Activated B cell treated with CpG ODN at 0.5 μM for 24 hours (primary cell): ENCODE measurements at regions of chr2 and their contacts with region 1.

Region 1: GRCh38 chr2:239303711-239304532 is 96.9 kb downstream of the HDAC4 start:
- DNase-seq: peak; percentile 13
- ATAC-seq: peak; percentile 82
- H3K4me3 Mint-ChIP-seq: peak overlapping the region; percentile 29
- H3K27ac Mint-ChIP-seq: peak overlapping the region; percentile 11
- H3K4me1 Mint-ChIP-seq: peaks cover 44% of the 10 kb centered on the region
- H3K27me3 Mint-ChIP-seq: no peaks in the 10 kb centered on the region
- CTCF ChIP-seq: no peak

Region 2: DNA sequence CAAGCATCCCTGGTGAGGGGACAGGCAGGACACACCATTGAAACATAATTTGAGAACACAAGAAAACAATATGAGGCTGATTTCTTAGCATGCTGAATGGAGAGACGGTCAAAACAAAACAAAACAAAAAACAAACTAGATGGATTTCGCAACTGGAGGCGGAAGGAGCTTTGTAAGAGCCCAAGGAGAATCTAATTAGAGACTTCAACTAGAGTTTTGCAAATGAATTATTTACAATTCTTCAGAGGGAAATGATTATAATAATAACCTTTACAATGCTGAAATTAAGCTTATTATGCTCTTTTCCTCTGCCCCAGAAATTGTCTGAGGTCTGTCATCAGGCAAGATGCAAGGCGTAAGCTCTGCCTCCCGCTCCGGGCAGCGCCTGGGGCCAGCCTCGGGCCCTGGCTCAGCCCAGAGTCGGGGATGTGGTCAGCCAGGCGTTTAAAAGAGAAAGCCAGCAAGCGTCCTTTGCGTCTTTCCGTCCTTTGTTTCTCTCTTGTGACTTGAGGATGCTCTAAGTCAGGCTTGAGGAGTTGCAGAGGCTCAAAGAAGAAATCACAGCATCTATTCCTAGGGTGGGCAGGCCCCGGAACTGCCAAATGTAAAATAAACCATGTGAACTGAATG is 316.5 kb before region 1 on chr2:
- CTCF ChIA-PET with region 1: no interaction called
- POLR2A ChIA-PET with region 1: no interaction called
- intact Hi-C with region 1: no loop called
- DNase-seq: no peak
- ATAC-seq: no peak
- H3K4me3 Mint-ChIP-seq: no peak overlapping the region
- H3K27ac Mint-ChIP-seq: no peak overlapping the region
- H3K4me1 Mint-ChIP-seq: no peaks in the 10 kb centered on the region
- H3K27me3 Mint-ChIP-seq: peaks cover 4% of the 10 kb centered on the region
- CTCF ChIP-seq: no peak

Region 3: DNA sequence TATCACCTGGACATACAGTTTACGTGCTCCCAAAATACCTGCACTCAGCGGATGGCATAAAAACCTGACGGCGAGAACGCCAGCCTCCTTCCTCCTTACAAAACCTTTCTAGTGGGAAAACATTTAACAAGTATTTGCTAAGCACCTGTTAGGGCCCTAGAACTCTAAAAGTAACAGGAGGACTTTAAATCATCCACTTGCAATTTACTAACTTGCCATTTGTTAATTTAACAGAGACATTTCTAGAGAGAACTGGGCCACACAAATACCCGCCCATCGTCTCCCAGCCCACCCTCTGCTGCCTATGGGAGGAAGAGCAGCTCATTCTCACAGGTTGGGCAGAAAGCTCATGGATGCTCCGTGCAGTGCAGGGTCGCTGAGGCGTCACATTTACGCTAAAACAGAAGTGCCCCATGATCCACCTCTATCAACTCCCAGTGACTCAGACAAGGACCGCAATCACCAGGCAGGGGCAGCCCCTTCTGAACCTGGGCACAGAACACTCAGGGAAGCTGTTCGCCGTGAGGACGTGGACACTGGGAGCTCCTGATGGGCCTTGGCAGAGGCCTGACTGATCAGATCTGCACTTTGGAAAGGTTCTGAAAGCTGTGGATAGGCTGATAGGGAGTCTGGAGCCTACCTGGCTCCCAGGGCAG is 10.0 kb before region 1 on chr2:
- CTCF ChIA-PET with region 1: interaction called, 3 read pairs
- POLR2A ChIA-PET with region 1: interaction called, 4 read pairs
- intact Hi-C with region 1: loop called (anchors 1 kb)
- DNase-seq: no peak
- ATAC-seq: peak; percentile 85
- H3K4me3 Mint-ChIP-seq: peak overlapping the region; percentile 28
- H3K27ac Mint-ChIP-seq: no peak overlapping the region
- H3K4me1 Mint-ChIP-seq: peaks cover 71% of the 10 kb centered on the region
- H3K27me3 Mint-ChIP-seq: peaks cover 4% of the 10 kb centered on the region
- CTCF ChIP-seq: no peak

Region 4: DNA sequence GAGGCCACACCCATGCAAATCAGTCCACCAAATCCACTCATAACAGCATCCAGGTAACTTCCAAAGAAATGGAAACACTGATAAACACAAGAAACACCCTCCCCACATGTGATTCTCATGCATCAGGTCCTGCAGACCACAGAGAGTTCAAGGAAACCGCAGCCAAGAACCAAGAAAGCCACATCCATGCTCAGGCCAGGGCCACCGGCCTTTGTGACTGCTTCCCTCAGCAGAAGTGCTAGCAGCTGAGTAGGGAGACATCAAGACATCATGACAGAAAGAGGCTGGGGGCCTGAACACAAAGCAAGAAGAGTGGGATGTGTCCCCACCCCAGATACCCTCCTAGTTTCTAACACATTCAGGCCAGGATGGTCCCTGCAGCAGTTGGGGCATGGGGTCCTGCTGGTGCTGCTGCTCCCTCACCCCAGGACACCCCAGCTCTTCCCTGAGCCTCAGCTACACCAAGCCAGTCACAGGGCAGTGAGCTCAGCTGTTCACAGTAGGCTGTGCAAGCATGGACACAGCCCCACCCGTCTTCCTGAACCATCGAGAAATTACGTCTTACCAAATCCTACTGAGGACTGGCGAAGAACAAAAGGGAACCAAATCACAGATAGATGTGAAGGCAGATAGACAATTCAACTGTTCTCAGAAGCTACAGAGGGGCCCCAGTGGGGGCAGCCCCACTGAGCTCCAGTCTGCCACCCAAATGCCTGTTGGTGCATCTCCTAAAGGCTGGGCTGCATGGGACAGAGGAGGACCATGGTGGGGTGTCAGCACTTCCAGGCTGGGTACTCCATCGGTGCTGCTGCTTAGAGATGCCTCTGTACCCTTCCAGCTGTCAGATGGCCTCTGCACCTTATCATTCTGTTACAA is 36.0 kb after region 1 on chr2:
- CTCF ChIA-PET with region 1: no interaction called
- POLR2A ChIA-PET with region 1: no interaction called
- intact Hi-C with region 1: loop called (anchors 5 kb)
- DNase-seq: no peak
- ATAC-seq: peak; percentile 68
- H3K4me3 Mint-ChIP-seq: no peak overlapping the region
- H3K27ac Mint-ChIP-seq: no peak overlapping the region
- H3K4me1 Mint-ChIP-seq: peaks cover 13% of the 10 kb centered on the region
- H3K27me3 Mint-ChIP-seq: no peaks in the 10 kb centered on the region
- CTCF ChIP-seq: no peak

Region 5: GRCh38 chr2:239358062-239358754 is 54.3 kb after region 1 on chr2:
- CTCF ChIA-PET with region 1: no interaction called
- POLR2A ChIA-PET with region 1: no interaction called
- intact Hi-C with region 1: no loop called
- DNase-seq: no peak
- ATAC-seq: no peak
- H3K4me3 Mint-ChIP-seq: no peak overlapping the region
- H3K27ac Mint-ChIP-seq: no peak overlapping the region
- H3K4me1 Mint-ChIP-seq: no peaks in the 10 kb centered on the region
- H3K27me3 Mint-ChIP-seq: no peaks in the 10 kb centered on the region
- CTCF ChIP-seq: no peak

Region 6: GRCh38 chr2:239380831-239381708 is 77.1 kb after region 1 on chr2:
- CTCF ChIA-PET with region 1: no interaction called
- POLR2A ChIA-PET with region 1: interaction called, 11 read pairs
- intact Hi-C with region 1: loop called (anchors 5 kb)
- DNase-seq: peak; percentile 55
- ATAC-seq: peak; percentile 66
- H3K4me3 Mint-ChIP-seq: peak overlapping the region; percentile 85
- H3K27ac Mint-ChIP-seq: peak overlapping the region; percentile 91
- H3K4me1 Mint-ChIP-seq: peaks cover 43% of the 10 kb centered on the region
- H3K27me3 Mint-ChIP-seq: no peaks in the 10 kb centered on the region
- CTCF ChIP-seq: no peak

Region 7: DNA sequence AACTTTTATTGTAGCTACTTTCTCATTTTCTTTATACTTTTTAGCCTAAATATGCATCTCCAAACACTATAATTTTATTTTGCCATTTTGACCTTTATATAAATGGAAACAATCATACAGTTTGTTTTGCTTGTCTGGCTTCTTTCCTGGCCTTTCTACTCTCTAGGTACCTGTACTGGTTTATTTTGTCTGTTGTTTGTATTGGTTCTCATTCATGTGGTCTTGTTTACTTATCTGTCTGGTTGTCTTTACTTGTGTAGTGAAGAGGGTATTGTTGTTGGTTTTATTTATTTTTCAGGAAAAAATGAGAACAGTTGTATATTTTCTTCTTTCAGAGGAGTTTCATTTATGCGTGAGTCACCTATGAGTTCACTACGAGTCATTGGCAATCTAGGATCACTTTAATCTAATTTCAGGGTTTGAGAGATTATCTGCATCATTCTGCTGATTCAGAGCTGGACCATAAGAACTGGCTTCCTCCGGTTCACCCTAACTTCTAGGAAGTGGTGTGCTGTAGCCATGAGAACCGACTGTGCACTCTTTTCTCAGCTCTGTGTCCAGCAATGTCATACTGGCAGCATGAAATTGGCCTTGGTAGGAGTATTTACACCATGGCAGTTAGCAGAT is 130.0 kb after region 1 on chr2:
- CTCF ChIA-PET with region 1: no interaction called
- POLR2A ChIA-PET with region 1: no interaction called
- intact Hi-C with region 1: no loop called
- DNase-seq: no peak
- ATAC-seq: no peak
- H3K4me3 Mint-ChIP-seq: no peak overlapping the region
- H3K27ac Mint-ChIP-seq: no peak overlapping the region
- H3K4me1 Mint-ChIP-seq: no peaks in the 10 kb centered on the region
- H3K27me3 Mint-ChIP-seq: peaks cover 21% of the 10 kb centered on the region
- CTCF ChIP-seq: no peak